Upper lobe of right lung (tissue), 1 donor: ENCODE measurements at regions of chr13 and their contacts with region 1.

Region 1: DNA sequence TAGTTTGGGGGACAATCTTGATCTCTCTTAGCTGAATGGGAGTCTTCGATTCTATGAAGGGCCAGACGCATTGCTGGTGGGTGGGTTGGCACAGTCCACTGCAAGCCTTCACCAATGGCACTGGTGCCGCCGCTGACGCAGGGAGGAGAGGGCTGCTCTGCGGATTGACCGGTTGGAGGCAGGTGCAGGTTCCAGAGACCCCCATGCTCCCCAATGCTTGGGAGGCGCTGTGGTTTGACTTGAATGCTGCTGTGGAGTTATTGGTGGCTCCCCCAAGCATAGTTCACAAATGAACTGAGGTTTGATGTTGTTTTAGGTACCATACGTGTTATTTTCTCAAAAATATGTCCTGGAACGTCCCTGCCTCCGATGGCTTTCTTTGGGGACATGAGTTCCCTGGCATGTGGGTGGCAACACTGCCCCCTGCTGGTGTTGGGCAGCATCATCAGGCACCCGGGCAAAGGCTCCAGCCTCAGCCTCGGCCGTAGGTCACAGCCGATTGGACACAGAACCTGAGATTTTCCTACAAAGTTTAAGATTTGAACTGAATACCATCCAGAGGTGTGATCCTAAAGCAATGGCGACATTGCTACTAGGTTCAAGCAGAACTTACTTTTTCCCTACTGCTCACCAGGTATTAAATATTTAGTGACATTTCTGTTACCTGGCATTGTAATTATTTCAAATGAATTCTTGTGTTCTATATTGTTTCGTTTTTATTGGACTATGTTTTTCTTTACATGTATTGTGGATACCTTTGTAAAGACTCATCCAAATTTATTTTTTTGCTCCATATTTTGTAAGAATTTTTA is 95.5 kb downstream of the ANKRD10 start:
- DNase-seq: peak; percentile 89
- ATAC-seq: peak; percentile 99
- H3K4me3 ChIP-seq: no peak overlapping the region
- H3K27ac ChIP-seq: no peak overlapping the region
- H3K4me1 ChIP-seq: peaks cover 6% of the 10 kb centered on the region
- H3K27me3 ChIP-seq: no peaks in the 10 kb centered on the region
- CTCF ChIP-seq: peak; percentile 98

Region 2: GRCh38 chr13:110580800-110581199 is 238.6 kb before region 1 on chr13:
- intact Hi-C with region 1: loop called (anchors 10 kb)
- DNase-seq: no peak
- ATAC-seq: no peak
- H3K4me3 ChIP-seq: no peak overlapping the region
- H3K27ac ChIP-seq: no peak overlapping the region
- H3K4me1 ChIP-seq: peaks cover under 1% of the 10 kb centered on the region
- H3K27me3 ChIP-seq: no peaks in the 10 kb centered on the region
- CTCF ChIP-seq: no peak